GM12878 (cell line): ENCODE measurements at regions of chr3 and their contacts with region 1.

Region 1: DNA sequence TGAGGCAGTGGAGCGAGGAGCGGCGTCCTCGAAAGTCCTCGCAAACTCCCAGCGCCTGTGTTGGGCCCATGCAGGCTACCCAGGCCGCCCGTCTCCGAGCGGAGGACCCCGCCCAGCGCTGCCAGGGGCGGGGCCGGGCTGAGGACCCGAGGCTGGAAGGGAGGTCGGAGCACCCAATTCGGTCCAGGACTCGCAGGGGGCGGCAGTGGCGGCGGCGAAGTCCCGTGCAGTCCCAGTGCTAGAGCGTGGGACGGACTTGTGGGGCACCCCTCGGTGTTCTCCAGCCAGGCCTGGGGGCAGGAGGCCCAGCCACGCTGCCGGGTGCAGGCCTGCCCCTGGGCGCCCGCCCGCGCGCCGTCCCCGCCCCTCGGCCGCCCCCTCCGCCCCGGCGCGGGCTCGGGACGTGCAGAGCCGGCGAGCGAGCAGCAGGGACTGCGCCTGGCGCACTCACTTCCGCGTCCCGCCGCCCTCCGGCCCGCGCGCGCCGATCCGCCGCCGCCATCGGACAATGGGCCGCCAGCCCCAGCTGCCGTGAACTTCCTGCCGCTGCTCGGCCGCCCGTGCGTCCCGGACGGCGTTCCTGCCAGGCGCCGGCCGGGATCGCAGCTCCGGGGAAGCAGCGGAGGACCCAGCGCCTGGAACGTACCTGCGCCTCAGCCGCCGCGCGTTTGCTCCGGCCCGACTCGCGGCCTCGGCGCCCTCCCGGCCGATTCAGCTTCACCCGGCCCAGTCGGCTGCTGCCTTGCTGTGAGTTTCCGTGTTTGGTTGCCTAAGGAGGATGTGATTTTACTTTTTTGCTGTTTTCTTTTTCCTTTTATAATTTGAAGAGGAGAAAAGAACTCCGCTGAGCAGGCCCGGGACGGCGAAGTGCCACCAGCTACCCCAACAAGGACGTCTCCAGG is 592 bp upstream of the LIMD1 start:
- DNase-seq: no peak
- ATAC-seq: peak; percentile 81
- H3K4me3 ChIP-seq: peak overlapping the region; percentile 81
- H3K27ac ChIP-seq: peak overlapping the region; percentile 89
- H3K4me1 ChIP-seq: peaks cover 18% of the 10 kb centered on the region
- H3K27me3 ChIP-seq: no peaks in the 10 kb centered on the region
- CTCF ChIP-seq: no peak
- EP300 ChIP-seq: no peak
- POLR2A ChIP-seq: peak; percentile 85
- RAD21 ChIP-seq: no peak

Region 2: DNA sequence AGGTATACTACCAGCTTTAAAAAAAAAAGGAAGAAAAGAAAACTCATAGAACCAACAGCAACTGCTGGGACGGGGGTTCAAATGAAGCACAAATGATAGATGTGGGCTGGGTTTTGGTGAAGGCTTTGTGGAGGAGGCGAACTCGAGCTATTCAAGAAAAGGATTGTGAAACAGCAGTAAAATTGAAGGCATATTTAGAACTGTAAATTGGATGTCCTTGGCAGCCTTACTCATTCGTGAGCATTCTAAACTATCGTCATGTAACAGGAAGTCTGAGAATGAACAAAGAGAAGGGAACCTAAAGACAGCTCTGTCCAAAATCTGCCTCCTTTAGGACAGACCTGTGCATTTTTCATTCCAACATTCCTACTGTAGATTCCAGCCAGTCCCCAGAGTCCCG is 107.8 kb before region 1 on chr3:
- CTCF ChIA-PET with region 1: no interaction called
- POLR2A ChIA-PET with region 1: no interaction called
- RAD21 ChIA-PET with region 1: no interaction called
- SMC1A ChIA-PET with region 1: no interaction called
- in situ Hi-C with region 1: no loop called
- intact Hi-C with region 1: no loop called
- DNase-seq: no peak
- ATAC-seq: no peak
- H3K4me3 ChIP-seq: no peak overlapping the region
- H3K27ac ChIP-seq: no peak overlapping the region
- H3K4me1 ChIP-seq: no peaks in the 10 kb centered on the region
- H3K27me3 ChIP-seq: no peaks in the 10 kb centered on the region
- CTCF ChIP-seq: no peak
- EP300 ChIP-seq: no peak
- POLR2A ChIP-seq: no peak
- RAD21 ChIP-seq: no peak

Region 3: GRCh38 chr3:45528429-45528828 is 65.5 kb before region 1 on chr3:
- CTCF ChIA-PET with region 1: no interaction called
- POLR2A ChIA-PET with region 1: interaction called, 3 read pairs
- RAD21 ChIA-PET with region 1: no interaction called
- SMC1A ChIA-PET with region 1: interaction called, 3 read pairs
- in situ Hi-C with region 1: no loop called
- intact Hi-C with region 1: loop called (anchors 5 kb)
- DNase-seq: no peak
- ATAC-seq: no peak
- H3K4me3 ChIP-seq: no peak overlapping the region
- H3K27ac ChIP-seq: no peak overlapping the region
- H3K4me1 ChIP-seq: no peaks in the 10 kb centered on the region
- H3K27me3 ChIP-seq: no peaks in the 10 kb centered on the region
- CTCF ChIP-seq: no peak
- EP300 ChIP-seq: no peak
- POLR2A ChIP-seq: no peak
- RAD21 ChIP-seq: no peak

Region 4: DNA sequence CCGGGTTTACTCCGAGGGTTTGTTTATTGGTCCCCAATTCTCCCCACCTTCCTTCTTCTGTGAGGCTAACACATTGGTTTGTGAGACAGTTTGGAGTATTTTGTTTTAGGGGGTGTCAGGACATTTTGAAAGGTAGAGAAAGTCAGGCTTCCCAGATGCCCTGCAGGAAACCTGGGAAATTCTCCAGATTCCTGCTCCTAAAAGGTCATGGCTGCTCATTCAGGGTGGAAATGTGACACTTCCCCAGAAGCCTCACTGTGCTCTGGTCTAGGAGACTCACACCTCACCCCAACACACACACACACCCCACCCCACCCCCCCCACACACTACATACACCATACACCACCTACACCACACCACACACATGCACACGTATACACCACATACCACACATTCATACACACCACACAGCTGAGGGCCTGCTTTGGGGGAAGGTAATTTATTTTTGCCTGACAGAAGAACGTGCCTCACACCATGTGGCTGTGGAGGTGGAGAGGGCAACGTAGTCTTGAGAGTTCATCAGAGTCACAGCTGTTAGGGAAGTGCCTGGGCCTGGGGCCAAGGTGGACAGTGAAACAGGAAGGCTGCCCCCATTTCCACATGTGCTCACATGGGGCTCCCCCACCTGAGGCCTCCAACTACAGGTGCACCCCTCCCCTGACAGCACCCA is 39.8 kb before region 1 on chr3:
- CTCF ChIA-PET with region 1: interaction called, 5 read pairs
- POLR2A ChIA-PET with region 1: interaction called, 4 read pairs
- RAD21 ChIA-PET with region 1: interaction called, 18 read pairs
- SMC1A ChIA-PET with region 1: interaction called, 13 read pairs
- in situ Hi-C with region 1: no loop called
- intact Hi-C with region 1: loop called (anchors 5 kb)
- DNase-seq: peak; percentile 68
- ATAC-seq: peak; percentile 78
- H3K4me3 ChIP-seq: no peak overlapping the region
- H3K27ac ChIP-seq: peak overlapping the region; percentile 55
- H3K4me1 ChIP-seq: peaks cover 33% of the 10 kb centered on the region
- H3K27me3 ChIP-seq: no peaks in the 10 kb centered on the region
- CTCF ChIP-seq: no peak
- EP300 ChIP-seq: peak; percentile 82 to 84; a peak in 3 of 4 replicates
- POLR2A ChIP-seq: no peak
- RAD21 ChIP-seq: no peak

Region 5: GRCh38 chr3:45612918-45613602 is 19.1 kb after region 1 on chr3:
- CTCF ChIA-PET with region 1: interaction called, 17 read pairs
- POLR2A ChIA-PET with region 1: interaction called, 9 read pairs
- RAD21 ChIA-PET with region 1: interaction called, 69 read pairs
- SMC1A ChIA-PET with region 1: interaction called, 56 read pairs
- in situ Hi-C with region 1: no loop called
- intact Hi-C with region 1: loop called (anchors 1 kb)
- DNase-seq: peak; percentile 91
- ATAC-seq: peak; percentile 85
- H3K4me3 ChIP-seq: peak overlapping the region; percentile 15; the same call in 1 of the 2 replicates
- H3K27ac ChIP-seq: peak overlapping the region; percentile 63
- H3K4me1 ChIP-seq: peaks cover 45% of the 10 kb centered on the region
- H3K27me3 ChIP-seq: no peaks in the 10 kb centered on the region
- CTCF ChIP-seq: no peak
- EP300 ChIP-seq: peak; percentile 39 to 62; a peak in 1 of 4 replicates
- POLR2A ChIP-seq: no peak
- RAD21 ChIP-seq: peak; percentile 33

Region 6: DNA sequence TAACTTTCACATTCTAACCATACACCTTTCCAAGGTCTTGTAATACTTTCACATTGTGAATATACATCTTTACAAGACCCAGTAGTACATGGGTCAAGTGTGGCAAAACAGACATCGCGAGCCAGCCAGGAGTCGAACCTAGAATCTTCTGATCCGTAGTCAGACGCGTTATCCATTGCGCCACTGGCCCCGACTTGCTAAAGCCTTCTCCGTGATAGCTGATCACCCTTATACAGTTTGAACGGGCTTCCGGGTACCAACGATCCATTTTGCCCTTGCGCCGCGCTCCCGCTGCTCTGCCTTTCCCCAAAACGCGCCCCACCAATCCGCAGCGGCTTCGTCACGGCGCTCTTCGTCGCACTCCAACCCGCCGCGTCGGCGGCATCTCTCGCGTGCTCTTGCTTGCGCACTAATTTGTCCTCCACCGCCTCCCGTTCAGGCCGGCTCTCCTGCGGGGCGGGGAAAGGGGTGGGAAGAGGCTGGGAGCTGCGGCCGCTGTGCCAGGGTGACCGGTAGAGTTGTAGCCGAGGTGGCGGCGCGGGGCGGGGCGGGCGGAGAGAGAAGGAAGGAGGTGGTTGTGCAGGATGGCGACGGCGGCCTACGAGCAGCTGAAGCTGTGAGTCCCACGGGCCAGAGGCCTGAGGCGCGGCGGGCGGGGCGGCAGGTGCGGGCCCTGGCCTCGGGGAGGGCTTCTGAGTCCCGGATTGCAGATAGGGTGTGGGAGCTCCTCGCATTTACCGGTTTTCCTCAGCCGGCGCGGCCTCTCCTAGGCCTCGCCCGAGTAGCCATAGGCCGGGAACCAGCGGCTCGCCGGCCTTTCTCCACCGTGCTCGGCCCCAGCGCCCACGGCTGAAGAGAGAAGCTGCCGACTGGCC is 95.2 kb after region 1 on chr3 and contains the start of gene SACM1L:
- CTCF ChIA-PET with region 1: interaction called, 4 read pairs
- POLR2A ChIA-PET with region 1: no interaction called
- RAD21 ChIA-PET with region 1: interaction called, 4 read pairs
- SMC1A ChIA-PET with region 1: interaction called, 11 read pairs
- in situ Hi-C with region 1: no loop called
- intact Hi-C with region 1: no loop called
- DNase-seq: peak; percentile 99
- ATAC-seq: peak; percentile 86
- H3K4me3 ChIP-seq: peak within 1 kb of the TSS; percentile 88
- H3K27ac ChIP-seq: peak within 1 kb of the TSS; percentile 84
- H3K4me1 ChIP-seq: peaks cover 22% of the 10 kb centered on the region
- H3K27me3 ChIP-seq: no peaks in the 10 kb centered on the region
- CTCF ChIP-seq: no peak
- EP300 ChIP-seq: peak in 1 of 2 experiments; percentile 82; a peak in 1 of 4 replicates
- POLR2A ChIP-seq: peak; percentile 86
- RAD21 ChIP-seq: no peak
- polyA plus RNA-seq, gene SACM1L: 16.5 to 20.7 TPM

Region 7: DNA sequence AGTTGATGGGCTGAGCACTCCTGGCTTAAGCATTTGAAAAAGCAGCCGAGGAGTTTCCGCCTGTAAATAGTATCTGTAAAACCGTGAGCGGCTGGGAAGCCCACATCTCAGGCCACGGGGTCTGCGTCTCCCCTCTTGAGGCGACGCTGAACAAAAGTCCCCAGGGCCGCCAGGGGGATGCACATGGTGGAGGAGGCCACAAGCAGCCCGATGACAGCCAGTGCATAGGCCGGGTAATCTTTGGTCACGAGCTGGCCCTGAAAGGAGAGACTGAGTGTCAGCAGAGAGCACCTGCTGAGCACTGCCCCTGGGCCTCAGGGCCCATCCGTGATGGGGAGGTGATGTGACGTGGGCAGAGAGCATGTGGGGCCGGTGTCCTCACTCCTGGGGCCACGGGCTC is 164.9 kb after region 1 on chr3:
- CTCF ChIA-PET with region 1: no interaction called
- POLR2A ChIA-PET with region 1: no interaction called
- RAD21 ChIA-PET with region 1: no interaction called
- SMC1A ChIA-PET with region 1: no interaction called
- in situ Hi-C with region 1: no loop called
- intact Hi-C with region 1: no loop called
- DNase-seq: no peak
- ATAC-seq: no peak
- H3K4me3 ChIP-seq: no peak overlapping the region
- H3K27ac ChIP-seq: no peak overlapping the region
- H3K4me1 ChIP-seq: no peaks in the 10 kb centered on the region
- H3K27me3 ChIP-seq: 0 out of 4 replicates have a peak, but pooled peaks cover 0 to 2% of the 10 kb centered on the region in 2 experiments
- CTCF ChIP-seq: no peak
- EP300 ChIP-seq: no peak
- POLR2A ChIP-seq: no peak
- RAD21 ChIP-seq: no peak